Activated CD4-positive, alpha-beta T cell treated with anti-CD3 and anti-CD28 coated beads, Interleukin-2, amount 10 ng/mL, durations not matched to agents 24 days and 14 days (primary cell): ENCODE measurements at regions of chr5 and their contacts with region 1.

Region 1: DNA sequence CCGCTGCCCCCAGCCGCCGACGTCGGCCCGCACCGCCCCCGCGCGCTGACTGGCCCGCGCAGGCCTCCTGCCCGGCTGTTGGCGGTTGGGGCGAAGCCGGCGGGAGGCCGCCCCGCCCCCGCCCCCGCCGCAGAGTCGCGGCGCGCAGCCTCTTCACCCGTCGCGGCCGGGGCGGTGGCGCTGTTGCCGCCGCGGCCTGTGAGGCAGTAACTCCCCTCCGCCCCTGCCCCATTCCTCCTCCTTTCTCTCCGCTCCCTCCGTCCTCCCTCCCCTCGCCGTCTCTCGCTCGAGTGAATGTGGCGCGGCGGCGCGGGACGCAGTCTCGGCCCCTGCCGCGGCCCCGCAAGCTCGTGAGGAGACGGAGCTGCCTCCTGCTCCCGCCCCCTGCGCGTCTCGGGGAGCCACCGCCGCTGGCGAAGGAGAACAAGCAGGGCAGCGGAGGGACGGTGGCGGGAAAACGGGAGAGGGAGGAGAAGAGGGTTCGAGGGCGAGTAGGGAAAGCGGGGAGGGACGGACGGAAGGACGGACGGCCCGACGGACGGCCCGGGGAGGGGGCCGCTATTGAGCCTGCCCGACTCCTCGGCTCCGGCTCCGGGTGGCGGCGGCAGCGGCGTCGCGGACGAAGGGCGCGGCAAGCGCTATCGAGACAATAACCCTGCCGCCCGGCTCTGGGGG is 637 bp upstream of the ERBIN start:
- DNase-seq: peak; percentile 93
- H3K4me3 Mint-ChIP-seq: peak overlapping the region; percentile 93
- H3K27ac Mint-ChIP-seq: peak overlapping the region; percentile 95
- H3K4me1 Mint-ChIP-seq: peaks cover 27% of the 10 kb centered on the region
- H3K27me3 Mint-ChIP-seq: peaks cover 17% of the 10 kb centered on the region

Region 2: DNA sequence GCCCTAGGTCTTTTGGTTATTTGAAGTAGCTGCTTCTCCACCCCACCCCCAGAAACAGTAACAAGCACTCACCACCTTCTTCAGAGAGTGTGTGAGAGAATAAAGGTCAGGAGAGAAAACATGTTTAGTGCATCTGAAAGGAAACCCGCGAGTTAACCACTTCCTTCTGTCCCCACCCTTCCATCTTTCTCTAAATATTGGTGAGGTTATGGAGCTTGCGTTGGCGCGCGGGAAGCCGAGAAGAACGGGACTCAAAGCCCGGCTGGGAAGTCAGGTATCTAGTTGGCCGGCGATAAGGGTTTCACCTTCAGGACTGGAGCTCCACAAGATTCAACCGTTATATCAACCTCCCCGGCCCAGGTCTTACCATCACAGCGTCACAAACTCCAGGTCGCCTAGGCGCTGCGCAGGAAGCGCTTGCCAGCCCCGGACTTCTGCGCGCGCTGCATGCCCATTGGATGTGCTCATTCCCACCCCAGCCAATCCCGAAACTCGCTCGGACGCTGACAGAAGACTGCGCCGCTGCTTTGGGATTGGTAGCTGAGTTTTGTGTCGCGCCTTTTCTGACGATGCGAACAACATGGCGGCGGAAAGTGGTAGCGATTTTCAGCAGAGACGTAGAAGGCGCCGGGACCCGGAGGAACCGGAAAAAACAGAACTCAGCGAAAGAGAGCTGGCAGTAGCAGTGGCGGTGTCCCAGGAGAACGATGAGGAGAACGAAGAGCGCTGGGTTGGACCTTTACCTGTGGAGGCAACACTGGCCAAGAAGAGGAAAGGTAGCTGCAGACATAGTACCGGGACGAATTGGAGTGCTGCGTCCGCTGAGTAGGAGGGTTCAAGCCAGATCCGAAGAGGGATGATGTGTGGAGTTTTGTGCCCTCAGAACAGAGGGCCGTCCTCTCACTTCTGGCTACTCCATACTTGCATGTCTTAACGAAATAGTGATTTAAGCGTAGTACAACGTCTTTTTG is 362.7 kb before region 1 on chr5 and contains the starts of genes CENPK and PPWD1:
- intact Hi-C with region 1: loop called (anchors 2 kb)
- DNase-seq: peak; percentile 98
- H3K4me3 Mint-ChIP-seq: peak within 1 kb of the TSS; percentile 91
- H3K27ac Mint-ChIP-seq: peak within 1 kb of the TSS; percentile 96
- H3K4me1 Mint-ChIP-seq: peaks cover 50% of the 10 kb centered on the region
- H3K27me3 Mint-ChIP-seq: no peaks in the 10 kb centered on the region
- total RNA-seq, gene CENPK: 87.8 and 88.8 TPM in 2 replicates
- total RNA-seq, gene PPWD1: 53.9 and 55.6 TPM in 2 replicates

Region 3: DNA sequence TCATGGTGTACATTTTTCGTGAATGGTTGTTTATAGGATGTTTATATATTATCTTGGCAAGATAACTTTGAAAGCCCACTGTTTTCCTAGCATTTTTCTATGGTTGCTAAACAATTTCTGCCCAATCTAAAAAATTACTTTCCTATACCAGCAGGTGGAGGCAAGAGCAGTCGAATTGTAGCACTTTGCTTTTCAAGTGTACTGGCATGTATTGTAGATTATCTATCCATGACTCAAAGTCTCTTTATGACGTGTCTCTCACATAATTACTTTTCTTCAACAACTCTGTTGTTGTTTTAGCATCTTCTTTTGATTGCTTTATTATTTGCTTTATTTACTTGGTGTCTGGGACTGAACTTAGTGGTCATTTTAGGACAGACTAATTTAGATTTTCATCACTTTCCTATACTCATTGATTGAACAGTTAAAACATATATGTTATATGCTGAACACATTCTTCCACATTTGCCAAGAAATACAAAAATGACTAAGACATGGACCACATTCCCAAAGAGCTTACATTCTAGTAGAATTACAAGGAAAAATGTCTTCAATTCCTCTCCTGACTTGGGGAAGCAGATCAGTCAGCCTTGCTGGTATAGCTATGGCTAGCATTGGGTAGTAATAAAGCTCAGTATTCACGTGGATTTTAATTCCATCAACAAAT is 183.0 kb before region 1 on chr5:
- intact Hi-C with region 1: loop called (anchors 2 kb)
- DNase-seq: peak; percentile 72
- H3K4me3 Mint-ChIP-seq: no peak overlapping the region
- H3K27ac Mint-ChIP-seq: no peak overlapping the region
- H3K4me1 Mint-ChIP-seq: peaks cover 8% of the 10 kb centered on the region
- H3K27me3 Mint-ChIP-seq: no peaks in the 10 kb centered on the region

Region 4: DNA sequence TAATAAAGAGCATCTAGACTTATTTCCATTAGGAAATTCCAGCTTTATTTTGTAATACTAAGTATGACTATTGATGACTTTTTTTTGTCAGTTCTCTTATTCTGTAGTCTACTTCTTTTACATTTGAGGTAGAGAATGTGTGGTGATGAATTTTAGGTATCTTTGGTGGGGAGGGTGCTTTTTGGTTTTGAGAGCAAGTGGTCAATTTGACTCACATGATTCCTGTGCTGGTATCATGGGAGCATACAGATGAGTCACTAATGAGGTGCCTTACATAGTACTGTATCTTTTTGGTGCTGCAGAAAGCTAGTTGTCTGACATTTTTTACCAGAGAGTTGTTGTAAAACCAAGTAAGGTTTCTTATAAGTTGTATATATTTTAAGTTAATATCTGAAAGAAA is 35.9 kb after region 1 on chr5:
- intact Hi-C with region 1: loop called (anchors 5 kb)
- DNase-seq: no peak
- H3K4me3 Mint-ChIP-seq: no peak overlapping the region
- H3K27ac Mint-ChIP-seq: no peak overlapping the region
- H3K4me1 Mint-ChIP-seq: peaks cover 13% of the 10 kb centered on the region
- H3K27me3 Mint-ChIP-seq: no peaks in the 10 kb centered on the region

Region 5: GRCh38 chr5:66144074-66144833 is 218.5 kb after region 1 on chr5 and contains the start of gene SREK1:
- intact Hi-C with region 1: loop called (anchors 1 kb)
- DNase-seq: peak; percentile 96
- H3K4me3 Mint-ChIP-seq: peak within 1 kb of the TSS; percentile 97
- H3K27ac Mint-ChIP-seq: peak within 1 kb of the TSS; percentile 99
- H3K4me1 Mint-ChIP-seq: peaks cover 34% of the 10 kb centered on the region
- H3K27me3 Mint-ChIP-seq: no peaks in the 10 kb centered on the region
- total RNA-seq, gene SREK1: 70.3 and 75.2 TPM in 2 replicates

Region 6: GRCh38 chr5:66337626-66338226 is 412.0 kb after region 1 on chr5:
- intact Hi-C with region 1: no loop called
- DNase-seq: no peak
- H3K4me3 Mint-ChIP-seq: no peak overlapping the region
- H3K27ac Mint-ChIP-seq: no peak overlapping the region
- H3K4me1 Mint-ChIP-seq: no peaks in the 10 kb centered on the region
- H3K27me3 Mint-ChIP-seq: peaks cover 21% of the 10 kb centered on the region

Region 7: DNA sequence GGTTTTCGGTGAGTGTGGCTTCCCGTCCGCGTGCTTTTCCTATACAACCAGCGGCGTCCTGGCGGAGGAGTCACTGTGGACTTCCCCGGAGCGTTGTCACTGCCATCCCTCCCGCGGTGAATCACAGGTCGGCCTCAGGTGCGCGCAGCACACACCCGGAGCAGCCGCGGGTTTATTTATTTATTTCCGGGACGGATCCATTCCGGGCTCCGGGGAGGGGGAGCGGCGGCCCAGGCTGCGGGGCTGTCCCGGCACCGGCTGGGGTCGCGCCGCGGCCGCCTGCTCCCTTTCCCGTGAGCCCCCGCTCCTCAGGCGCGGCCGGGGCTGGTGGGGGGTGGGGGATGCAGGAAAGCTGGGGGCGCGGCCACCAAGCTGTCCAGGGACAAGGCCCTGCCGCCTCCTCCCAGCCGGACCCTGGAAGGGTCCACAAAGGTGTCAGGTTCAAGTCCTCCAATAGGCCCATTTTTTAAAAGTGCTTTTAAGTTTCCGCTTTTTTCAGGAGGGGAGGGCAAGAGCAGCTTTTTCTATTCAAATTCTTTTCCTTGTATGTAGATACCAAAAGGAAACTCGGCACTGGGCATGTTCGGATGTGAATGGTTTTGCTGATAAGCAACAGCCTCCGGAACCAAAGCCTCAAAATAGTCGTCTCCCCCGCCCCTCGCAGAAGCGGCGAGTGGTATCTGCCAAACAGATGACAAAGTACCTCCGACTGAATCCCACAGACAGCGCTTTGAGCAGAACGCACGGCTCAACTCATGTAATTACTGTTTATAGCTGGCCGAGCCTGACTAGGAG is 1078.4 kb after region 1 on chr5:
- intact Hi-C with region 1: loop called (anchors 5 kb)
- DNase-seq: peak; percentile 96
- H3K4me3 Mint-ChIP-seq: peak overlapping the region; percentile 96
- H3K27ac Mint-ChIP-seq: peak overlapping the region; percentile 97
- H3K4me1 Mint-ChIP-seq: peaks cover 56% of the 10 kb centered on the region
- H3K27me3 Mint-ChIP-seq: no peaks in the 10 kb centered on the region